ENCODE measurements at regions of chr5 and their contacts with region 1.

Region 1: GRCh38 chr5:56838409-56839039 is 23.2 kb downstream of the MAP3K1 start:
- DNase-seq: no peak
- H3K4me3 Mint-ChIP-seq: peak overlapping the region; percentile 33
- H3K27ac Mint-ChIP-seq: peak overlapping the region; percentile 50
- H3K4me1 Mint-ChIP-seq: peaks cover 66% of the 10 kb centered on the region
- H3K27me3 Mint-ChIP-seq: no peaks in the 10 kb centered on the region

Region 2: DNA sequence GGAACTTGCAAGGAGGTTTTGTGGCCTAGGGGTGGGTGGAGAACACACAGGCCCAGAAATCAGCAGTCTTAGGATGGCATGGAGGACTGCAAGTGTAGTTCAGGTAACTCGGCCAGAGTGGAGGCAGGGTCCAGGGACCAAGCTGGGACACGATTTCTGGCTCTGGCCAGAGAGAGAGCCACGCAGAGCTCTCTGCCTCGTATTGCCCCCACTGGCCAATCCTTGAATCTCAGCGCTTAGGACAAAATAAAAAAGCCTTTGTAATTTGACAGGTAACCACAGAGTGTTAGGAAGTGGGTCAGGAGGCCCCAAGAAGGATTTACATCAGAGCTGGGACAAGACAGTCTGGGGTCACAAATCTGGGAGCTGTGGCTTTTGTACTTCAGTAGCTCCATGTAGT is 11.5 kb before region 1 on chr5:
- CTCF ChIA-PET with region 1: interaction called, 18 read pairs
- POLR2A ChIA-PET with region 1: interaction called, 20 read pairs
- DNase-seq: no peak
- H3K4me3 Mint-ChIP-seq: no peak overlapping the region
- H3K27ac Mint-ChIP-seq: peak overlapping the region; percentile 49
- H3K4me1 Mint-ChIP-seq: peaks cover 86% of the 10 kb centered on the region
- H3K27me3 Mint-ChIP-seq: no peaks in the 10 kb centered on the region

Region 3: GRCh38 chr5:56941981-56942380 is 103.5 kb after region 1 on chr5:
- CTCF ChIA-PET with region 1: no interaction called
- POLR2A ChIA-PET with region 1: no interaction called
- DNase-seq: no peak
- H3K4me3 Mint-ChIP-seq: no peak overlapping the region
- H3K27ac Mint-ChIP-seq: no peak overlapping the region
- H3K4me1 Mint-ChIP-seq: peaks cover 2% of the 10 kb centered on the region
- H3K27me3 Mint-ChIP-seq: no peaks in the 10 kb centered on the region

Measured in activated CD4-positive, alpha-beta memory T cell treated with anti-CD3 and anti-CD28 coated beads, Interleukin-2, amount 10 ng/mL, durations not matched to agents 7 days and 5 days (primary cell).